ENCODE measurements at regions of chr4 and their contacts with region 1.

Region 1: DNA sequence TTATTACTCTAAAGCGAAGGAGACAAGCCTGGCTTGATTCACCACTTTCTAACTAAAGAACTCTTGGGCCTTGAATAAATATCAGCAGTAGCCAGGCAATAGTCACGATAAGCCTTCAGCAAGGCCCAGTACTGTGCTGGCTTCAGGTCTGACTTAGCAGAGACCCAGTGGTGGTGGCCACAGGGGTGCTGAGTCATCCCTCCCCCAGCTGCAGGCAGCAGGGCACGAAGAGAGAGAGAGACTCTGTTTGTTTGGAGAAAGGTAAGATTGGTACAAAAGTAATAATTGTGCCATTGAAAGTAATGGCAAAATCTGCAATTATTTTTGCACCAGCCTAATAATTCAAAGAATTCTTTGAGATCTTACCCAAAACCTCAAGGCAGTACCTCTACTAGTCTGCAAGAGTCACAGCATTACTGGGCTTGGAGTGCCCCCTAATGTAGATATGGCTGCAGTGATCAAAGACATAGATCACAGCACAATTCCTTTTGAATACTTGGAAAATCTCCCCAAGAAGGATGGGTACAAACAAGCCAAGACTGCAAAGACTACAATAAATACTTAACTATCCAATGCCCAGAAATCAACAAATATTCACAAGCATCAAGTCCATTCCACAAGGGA is 159.5 kb upstream of the USP38 start:
- DNase-seq: peak; percentile 50
- ATAC-seq: peak; percentile 87
- H3K4me3 ChIP-seq: no peak overlapping the region
- H3K27ac ChIP-seq: no peak overlapping the region
- H3K4me1 ChIP-seq: peaks cover 0 to 6% of the 10 kb centered on the region in 2 experiments; a peak in 1 of 4 replicates
- H3K27me3 ChIP-seq: no peaks in the 10 kb centered on the region
- CTCF ChIP-seq: peak; percentile 48 to 65 (median 52); a peak in 5 of 6 replicates
- POLR2A ChIP-seq: no peak
- RAD21 ChIP-seq: peak; percentile 78

Region 2: GRCh38 chr4:141158219-141158618 is 1867.0 kb before region 1 on chr4:
- CTCF ChIA-PET with region 1: no interaction called
- POLR2A ChIA-PET with region 1: no interaction called
- RAD21 ChIA-PET with region 1: no interaction called
- intact Hi-C with region 1: loop called (anchors 5 kb)
- DNase-seq: peak; percentile 33
- ATAC-seq: no peak
- H3K4me3 ChIP-seq: no peak overlapping the region
- H3K27ac ChIP-seq: no peak overlapping the region
- H3K4me1 ChIP-seq: no peaks in the 10 kb centered on the region
- H3K27me3 ChIP-seq: no peaks in the 10 kb centered on the region
- CTCF ChIP-seq: peak; percentile 23 to 67 (median 43); a peak in 4 of 6 replicates
- POLR2A ChIP-seq: no peak
- RAD21 ChIP-seq: peak; percentile 71

Region 3: GRCh38 chr4:142883040-142883832 is 142.0 kb before region 1 on chr4:
- CTCF ChIA-PET with region 1: interaction called, 3 read pairs
- POLR2A ChIA-PET with region 1: no interaction called
- RAD21 ChIA-PET with region 1: no interaction called
- intact Hi-C with region 1: loop called (anchors 5 kb)
- DNase-seq: peak; percentile 12
- ATAC-seq: peak; percentile 72
- H3K4me3 ChIP-seq: no peak overlapping the region
- H3K27ac ChIP-seq: no peak overlapping the region
- H3K4me1 ChIP-seq: no peaks in the 10 kb centered on the region
- H3K27me3 ChIP-seq: no peaks in the 10 kb centered on the region
- CTCF ChIP-seq: peak; percentile 15 to 56 (median 39); a peak in 5 of 6 replicates
- POLR2A ChIP-seq: no peak
- RAD21 ChIP-seq: peak; percentile 53

Region 4: DNA sequence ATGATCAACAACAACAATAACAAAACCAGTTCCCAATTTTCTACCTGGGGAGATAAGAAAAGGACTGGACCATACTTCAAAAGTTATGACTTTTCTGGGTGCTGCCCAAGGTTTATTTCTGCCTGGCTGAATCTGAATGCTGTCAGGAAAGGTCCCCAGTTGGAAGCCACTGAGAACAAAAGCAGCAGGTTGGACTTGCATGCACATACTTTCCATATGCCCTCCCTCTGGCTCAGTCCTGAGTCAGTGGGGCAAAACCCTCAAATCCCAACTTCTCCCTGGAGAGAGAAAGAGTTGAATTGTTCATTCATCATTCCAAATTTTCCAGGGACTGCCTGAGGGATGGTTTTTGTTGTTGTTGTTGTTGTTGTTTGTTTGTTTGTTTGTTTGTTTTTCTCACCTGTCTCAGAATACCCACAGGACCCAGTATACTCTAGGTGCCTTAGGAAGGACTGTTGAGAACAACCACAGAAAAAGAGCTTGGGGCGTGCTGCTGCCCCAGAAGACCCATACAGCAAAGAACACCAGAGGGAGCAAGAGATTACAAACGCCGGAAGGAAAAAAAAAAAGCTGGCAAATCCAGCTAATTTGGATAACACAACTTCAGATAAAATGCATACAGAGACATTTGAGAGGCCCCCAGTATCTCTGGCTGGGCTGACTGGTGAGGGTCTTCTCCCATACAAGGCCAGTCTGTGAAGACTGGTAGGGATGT is 40.2 kb before region 1 on chr4:
- CTCF ChIA-PET with region 1: interaction called, 12 read pairs
- POLR2A ChIA-PET with region 1: no interaction called
- RAD21 ChIA-PET with region 1: interaction called in 1 of 2 experiments, 3 read pairs
- intact Hi-C with region 1: loop called (anchors 5 kb)
- DNase-seq: peak; percentile 40
- ATAC-seq: peak; percentile 96
- H3K4me3 ChIP-seq: no peak overlapping the region
- H3K27ac ChIP-seq: no peak overlapping the region
- H3K4me1 ChIP-seq: no peaks in the 10 kb centered on the region
- H3K27me3 ChIP-seq: no peaks in the 10 kb centered on the region
- CTCF ChIP-seq: peak; percentile 57 to 66 (median 62); a peak in 5 of 6 replicates
- POLR2A ChIP-seq: no peak
- RAD21 ChIP-seq: peak; percentile 66